AG04450 (cell line): ENCODE measurements at regions of chr4 and their contacts with region 1.

Region 1: GRCh38 chr4:80365928-80366327 is 30.4 kb downstream of the CFAP299 start:
- DNase-seq: peak; percentile 62
- H3K4me3 ChIP-seq: no peak overlapping the region
- H3K27ac ChIP-seq: no peak overlapping the region
- H3K27me3 ChIP-seq: no peaks in the 10 kb centered on the region
- CTCF ChIP-seq: peak; percentile 86

Region 2: GRCh38 chr4:80343887-80344286 is 22.0 kb before region 1 on chr4:
- CTCF ChIA-PET with region 1: interaction called, 15 read pairs
- POLR2A ChIA-PET with region 1: no interaction called
- DNase-seq: no peak
- H3K4me3 ChIP-seq: no peak overlapping the region
- H3K27ac ChIP-seq: no peak overlapping the region
- H3K27me3 ChIP-seq: no peaks in the 10 kb centered on the region
- CTCF ChIP-seq: no peak

Region 3: GRCh38 chr4:80989921-80990544 is 624.1 kb after region 1 on chr4:
- CTCF ChIA-PET with region 1: interaction called, 231 read pairs
- POLR2A ChIA-PET with region 1: no interaction called
- DNase-seq: peak; percentile 27
- H3K4me3 ChIP-seq: no peak overlapping the region
- H3K27ac ChIP-seq: no peak overlapping the region
- H3K27me3 ChIP-seq: no peaks in the 10 kb centered on the region
- CTCF ChIP-seq: peak; percentile 74

Region 4: GRCh38 chr4:81040012-81040659 is 674.2 kb after region 1 on chr4:
- CTCF ChIA-PET with region 1: interaction called, 111 read pairs
- POLR2A ChIA-PET with region 1: no interaction called
- DNase-seq: no peak
- H3K4me3 ChIP-seq: no peak overlapping the region
- H3K27ac ChIP-seq: no peak overlapping the region
- H3K27me3 ChIP-seq: peaks cover 3% of the 10 kb centered on the region
- CTCF ChIP-seq: peak; percentile 79